Activated T-helper 2 cell treated with anti-CD3 and anti-CD28 coated beads, Interferon-gamma antibody, Interleukin-2, Interleukin-4, amounts not matched to agents 10 μg/mL and 5 μg/mL and 100 μg/mL, durations not matched to agents 14 hours and 24 hours and 36 hours (primary cell): ENCODE measurements at regions of chr6 and their contacts with region 1.

Region 1: GRCh38 chr6:2940010-2940850 is 31.1 kb downstream of the SERPINB6 start:
- DNase-seq: peak; percentile 76
- H3K4me3 Mint-ChIP-seq: no peak overlapping the region
- H3K27ac Mint-ChIP-seq: peak overlapping the region; percentile 92
- H3K4me1 Mint-ChIP-seq: peaks cover 48% of the 10 kb centered on the region
- H3K27me3 Mint-ChIP-seq: no peaks in the 10 kb centered on the region

Region 2: DNA sequence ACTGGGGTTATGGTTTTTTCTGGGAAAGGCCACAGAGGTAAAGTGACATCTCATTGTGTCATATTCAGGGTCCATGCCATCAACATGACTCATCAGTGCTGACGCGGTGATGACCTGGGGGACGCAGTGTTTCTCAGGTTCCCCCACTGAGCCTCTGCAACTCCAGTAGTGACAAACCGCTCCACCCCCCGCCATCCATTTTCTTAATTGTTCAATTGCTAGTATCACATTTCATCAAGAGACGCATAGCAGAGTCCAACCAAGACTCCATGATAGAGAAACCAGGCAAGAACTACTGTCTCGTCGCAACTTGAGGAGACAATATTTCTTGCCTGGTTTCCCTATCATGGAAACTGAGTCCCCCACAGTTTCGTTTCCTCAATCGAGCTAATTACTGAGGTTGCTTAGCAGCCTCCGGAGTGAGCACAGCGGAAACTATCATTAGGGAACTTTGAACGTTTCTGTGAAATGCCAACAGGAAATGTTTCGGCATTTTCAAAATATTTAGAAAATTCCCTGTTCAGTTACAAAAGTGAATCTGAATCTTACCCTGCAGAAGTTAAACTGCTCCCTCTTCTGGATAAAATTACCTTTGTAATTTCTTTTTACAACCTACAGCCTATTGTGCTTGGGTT is 86.4 kb before region 1 on chr6:
- intact Hi-C with region 1: loop called (anchors 1 kb)
- DNase-seq: no peak
- H3K4me3 Mint-ChIP-seq: peak overlapping the region; percentile 43
- H3K27ac Mint-ChIP-seq: peak overlapping the region; percentile 99
- H3K4me1 Mint-ChIP-seq: peaks cover 68% of the 10 kb centered on the region
- H3K27me3 Mint-ChIP-seq: no peaks in the 10 kb centered on the region

Region 3: GRCh38 chr6:2952557-2953095 is 12.4 kb after region 1 on chr6:
- intact Hi-C with region 1: loop called (anchors 1 kb)
- DNase-seq: peak; percentile 53
- H3K4me3 Mint-ChIP-seq: peak overlapping the region; percentile 57
- H3K27ac Mint-ChIP-seq: peak overlapping the region; percentile 86
- H3K4me1 Mint-ChIP-seq: peaks cover 19% of the 10 kb centered on the region
- H3K27me3 Mint-ChIP-seq: no peaks in the 10 kb centered on the region

Region 4: DNA sequence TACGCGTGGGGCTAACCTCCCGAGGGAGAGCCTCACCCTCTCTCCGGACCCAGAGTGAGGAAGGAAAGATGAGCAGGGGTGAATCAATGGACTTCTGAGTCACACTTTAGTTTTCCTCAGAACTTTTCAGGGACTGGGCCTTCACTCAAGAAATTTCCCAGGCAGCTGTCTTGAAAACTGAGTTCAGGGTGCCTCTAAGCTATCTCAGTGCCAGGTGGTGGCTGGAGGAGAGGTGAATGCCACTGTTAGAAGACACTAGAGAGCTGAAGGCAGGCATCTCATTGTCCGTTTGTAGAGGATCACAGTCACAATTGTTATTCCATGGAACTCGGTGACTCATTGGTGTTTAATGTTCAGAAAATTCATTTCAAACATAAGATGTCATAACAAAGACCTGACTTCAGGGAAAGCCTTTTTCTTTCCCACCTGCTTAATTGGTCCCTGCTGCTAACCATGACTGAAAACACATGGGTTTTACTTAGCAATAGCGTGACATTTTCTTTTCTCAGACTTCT is 36.4 kb after region 1 on chr6:
- intact Hi-C with region 1: loop called (anchors 1 kb)
- DNase-seq: no peak
- H3K4me3 Mint-ChIP-seq: no peak overlapping the region
- H3K27ac Mint-ChIP-seq: peak overlapping the region; percentile 66
- H3K4me1 Mint-ChIP-seq: peaks cover 36% of the 10 kb centered on the region
- H3K27me3 Mint-ChIP-seq: peaks cover 15% of the 10 kb centered on the region

Region 5: GRCh38 chr6:3209114-3210023 is 269.1 kb after region 1 on chr6:
- intact Hi-C with region 1: loop called (anchors 2 kb)
- DNase-seq: no peak
- H3K4me3 Mint-ChIP-seq: peak overlapping the region; percentile 60
- H3K27ac Mint-ChIP-seq: peak overlapping the region; percentile 89
- H3K4me1 Mint-ChIP-seq: peaks cover 26% of the 10 kb centered on the region
- H3K27me3 Mint-ChIP-seq: peaks cover 29% of the 10 kb centered on the region